Dendritic cell treated with granulocyte-macrophage colony-stimulating factor and Interleukin-4, amounts not matched to agents 40 ng/mL and 50 ng/mL, for 4 days (primary cell): ENCODE measurements at regions of chr12 and their contacts with region 1.

Region 1: GRCh38 chr12:108495054-108495453 is 20.0 kb upstream of the FICD start:
- H3K4me3 Mint-ChIP-seq: no peak overlapping the region
- H3K27ac Mint-ChIP-seq: no peak overlapping the region
- H3K4me1 Mint-ChIP-seq: no peaks in the 10 kb centered on the region
- H3K27me3 Mint-ChIP-seq: peaks cover 27% of the 10 kb centered on the region

Region 2: DNA sequence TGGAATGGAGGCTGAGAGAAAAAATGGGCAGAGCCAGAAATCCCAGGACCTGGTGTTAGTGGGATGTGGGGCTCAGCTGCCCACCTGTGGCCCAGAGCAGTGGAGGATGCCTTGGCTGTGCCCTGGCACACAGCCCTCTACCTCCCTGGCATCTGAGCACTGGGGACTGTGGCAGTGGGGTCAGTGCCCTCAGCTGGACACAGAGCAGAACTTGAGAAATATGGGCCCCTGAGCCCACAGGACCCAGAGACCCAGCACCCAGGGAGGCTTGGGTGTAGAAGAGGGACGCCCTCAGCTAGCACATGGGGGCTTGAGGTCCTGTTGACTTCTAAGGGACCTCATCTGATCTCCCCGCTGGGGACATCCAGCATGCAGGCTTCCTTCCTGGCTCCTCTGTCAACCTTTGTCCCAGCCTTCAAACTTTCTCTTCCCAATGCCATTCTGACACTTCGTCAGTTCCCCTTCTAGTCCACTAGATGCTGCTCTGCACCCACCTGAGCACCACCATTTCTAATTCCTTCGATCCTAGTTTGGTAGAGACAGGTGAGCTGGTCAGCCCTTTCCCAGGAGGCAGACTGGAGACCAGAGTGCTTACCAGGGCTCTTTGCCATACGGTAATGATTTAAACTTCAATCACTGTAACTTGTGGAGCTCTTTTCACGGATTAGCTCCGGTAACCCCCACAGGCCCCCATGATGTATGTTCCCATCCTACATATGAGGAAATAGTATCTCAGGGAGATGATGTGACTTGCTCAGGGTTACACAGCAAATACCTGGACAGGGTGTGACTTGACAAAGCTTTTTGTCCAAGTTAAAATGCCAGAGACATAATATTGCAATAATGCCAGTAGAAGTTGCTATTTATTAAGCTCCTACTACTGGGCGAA is 576.9 kb before region 1 on chr12:
- intact Hi-C with region 1: loop called (anchors 5 kb)
- H3K4me3 Mint-ChIP-seq: no peak overlapping the region
- H3K27ac Mint-ChIP-seq: no peak overlapping the region
- H3K4me1 Mint-ChIP-seq: no peaks in the 10 kb centered on the region
- H3K27me3 Mint-ChIP-seq: peaks cover 38% of the 10 kb centered on the region

Region 3: DNA sequence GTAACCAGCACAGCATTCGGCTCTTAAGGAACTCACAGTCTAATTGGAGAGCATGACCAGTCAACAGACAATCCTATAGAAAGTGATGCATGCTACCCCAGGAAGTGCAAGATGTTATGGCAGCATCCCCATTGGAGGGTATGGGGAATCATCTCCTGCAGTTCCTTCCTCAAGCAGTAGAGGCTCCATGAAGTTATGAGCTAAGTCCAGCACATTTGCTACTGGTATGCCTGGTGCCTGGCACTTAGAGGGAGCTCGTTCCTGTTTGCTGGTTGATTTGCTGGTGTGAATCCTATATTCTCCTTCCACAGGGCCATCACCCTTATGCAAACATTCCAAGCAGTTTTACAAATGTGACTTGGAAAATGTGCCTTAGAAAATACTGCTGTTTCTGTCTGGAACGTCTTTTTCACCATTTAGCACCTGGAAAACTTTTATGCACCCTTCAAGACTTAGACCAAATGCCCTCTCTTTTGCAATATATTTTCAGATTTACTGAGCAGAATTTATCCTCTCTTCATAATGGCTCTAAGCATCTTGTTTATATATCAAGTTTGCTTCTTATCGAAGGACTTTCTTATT is 502.1 kb before region 1 on chr12:
- intact Hi-C with region 1: loop called (anchors 10 kb)
- H3K4me3 Mint-ChIP-seq: no peak overlapping the region
- H3K27ac Mint-ChIP-seq: no peak overlapping the region
- H3K4me1 Mint-ChIP-seq: no peaks in the 10 kb centered on the region
- H3K27me3 Mint-ChIP-seq: peaks cover 28% of the 10 kb centered on the region

Region 4: GRCh38 chr12:108099073-108099472 is 396.0 kb before region 1 on chr12:
- intact Hi-C with region 1: loop called (anchors 10 kb)
- H3K4me3 Mint-ChIP-seq: no peak overlapping the region
- H3K27ac Mint-ChIP-seq: no peak overlapping the region
- H3K4me1 Mint-ChIP-seq: no peaks in the 10 kb centered on the region
- H3K27me3 Mint-ChIP-seq: peaks cover 22% of the 10 kb centered on the region

Region 5: GRCh38 chr12:108234158-108234557 is 260.9 kb before region 1 on chr12:
- intact Hi-C with region 1: loop called (anchors 5 kb)
- H3K4me3 Mint-ChIP-seq: no peak overlapping the region
- H3K27ac Mint-ChIP-seq: no peak overlapping the region
- H3K4me1 Mint-ChIP-seq: no peaks in the 10 kb centered on the region
- H3K27me3 Mint-ChIP-seq: peaks cover 41% of the 10 kb centered on the region